ENCODE measurements at regions of chr3 and their contacts with region 1.

Region 1: DNA sequence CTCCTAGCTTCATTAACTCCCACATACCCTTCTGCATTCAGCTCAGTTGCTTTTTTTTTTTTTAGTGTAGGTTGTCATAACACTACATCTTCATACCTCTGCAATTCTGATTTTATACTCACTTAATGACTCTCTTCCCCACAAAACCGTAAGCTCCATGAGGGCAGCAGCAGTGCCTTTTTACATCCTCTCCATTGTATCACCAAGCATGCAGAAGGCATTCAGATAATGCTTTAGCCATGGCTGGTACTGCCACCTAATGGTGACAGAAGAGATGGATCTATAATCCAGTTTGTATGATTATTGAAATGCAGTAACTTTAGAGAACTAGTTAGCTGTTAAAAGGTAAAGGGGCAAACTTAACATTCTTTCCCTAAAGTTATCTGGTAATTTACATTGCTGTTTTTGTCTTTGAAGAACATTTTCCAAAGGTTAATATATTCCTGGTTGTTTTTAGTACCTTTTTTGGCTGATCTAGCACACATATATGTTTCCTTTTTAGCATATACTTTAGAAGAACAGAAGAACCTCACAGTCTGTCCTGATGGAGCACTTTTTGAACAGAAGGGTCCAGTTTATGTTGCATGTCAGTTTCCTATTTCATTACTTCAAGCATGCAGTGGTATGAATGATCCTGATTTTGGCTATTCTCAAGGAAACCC is 36.8 kb downstream of the ATP1B3 start:
- DNase-seq: peak; percentile 67
- ATAC-seq: peak; percentile 80
- H3K4me3 Mint-ChIP-seq: no peak overlapping the region
- H3K27ac Mint-ChIP-seq: peak overlapping the region; percentile 6
- H3K4me1 Mint-ChIP-seq: peaks cover 4% of the 10 kb centered on the region
- H3K27me3 Mint-ChIP-seq: no peaks in the 10 kb centered on the region
- CTCF ChIP-seq: peak; percentile 70

Region 2: DNA sequence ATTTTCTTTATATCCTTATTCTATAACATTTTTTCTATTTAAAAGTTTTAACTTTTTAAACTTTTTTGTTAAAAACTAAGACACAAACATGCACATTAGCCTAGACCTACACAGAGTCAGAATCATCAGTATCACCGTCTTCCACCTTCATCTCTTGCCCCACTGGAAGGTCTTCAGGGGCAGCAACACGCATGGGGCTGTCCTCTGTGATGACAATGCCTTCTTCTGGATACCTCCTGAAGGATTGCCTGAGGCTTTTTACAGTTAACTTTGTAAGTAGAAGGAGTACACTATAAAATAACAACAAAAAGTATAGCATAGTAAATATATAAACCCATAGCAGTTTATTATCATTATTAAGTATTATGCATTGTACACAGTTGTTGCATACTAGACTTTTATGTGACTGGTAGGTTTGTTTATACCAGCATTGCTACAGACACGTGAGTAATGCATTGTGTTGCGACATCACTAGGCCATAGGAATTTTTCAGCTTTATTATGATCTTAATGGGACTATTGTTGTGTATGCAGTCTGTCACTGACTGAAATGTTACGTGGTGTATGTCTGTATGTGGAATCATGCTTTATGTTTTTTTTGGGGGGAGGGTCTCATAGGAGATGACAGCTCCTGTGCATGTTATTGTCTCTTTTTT is 18.6 kb before region 1 on chr3:
- CTCF ChIA-PET with region 1: interaction called, 12 read pairs
- POLR2A ChIA-PET with region 1: interaction called, 4 read pairs
- intact Hi-C with region 1: no loop called
- DNase-seq: no peak
- ATAC-seq: no peak
- H3K4me3 Mint-ChIP-seq: no peak overlapping the region
- H3K27ac Mint-ChIP-seq: no peak overlapping the region
- H3K4me1 Mint-ChIP-seq: peaks cover 35% of the 10 kb centered on the region
- H3K27me3 Mint-ChIP-seq: no peaks in the 10 kb centered on the region
- CTCF ChIP-seq: no peak

Region 3: DNA sequence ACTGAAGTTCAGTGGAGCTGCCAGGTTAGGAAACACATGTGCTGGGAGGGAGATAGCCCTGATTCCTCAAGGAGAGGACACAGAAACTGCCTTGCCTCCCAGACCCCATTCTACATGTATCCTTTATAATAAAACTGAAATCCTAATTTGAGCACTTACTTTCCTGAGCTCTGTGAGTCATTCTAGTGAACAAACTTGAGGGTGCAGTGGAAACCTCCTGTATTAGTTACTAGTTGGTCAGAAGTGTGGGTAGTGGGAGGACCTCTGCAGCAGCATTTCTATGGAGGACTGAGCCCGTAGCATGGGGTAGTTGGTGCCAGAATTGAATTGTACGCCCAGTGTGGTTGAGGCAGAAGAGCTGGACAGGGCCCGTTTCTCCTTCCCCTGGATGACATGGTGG is 12.9 kb before region 1 on chr3:
- CTCF ChIA-PET with region 1: interaction called, 12 read pairs
- POLR2A ChIA-PET with region 1: interaction called, 4 read pairs
- intact Hi-C with region 1: no loop called
- DNase-seq: no peak
- ATAC-seq: no peak
- H3K4me3 Mint-ChIP-seq: no peak overlapping the region
- H3K27ac Mint-ChIP-seq: no peak overlapping the region
- H3K4me1 Mint-ChIP-seq: peaks cover 32% of the 10 kb centered on the region
- H3K27me3 Mint-ChIP-seq: no peaks in the 10 kb centered on the region
- CTCF ChIP-seq: no peak